Astrocyte of the cerebellum (primary cell): ENCODE measurements at regions of chr5 and their contacts with region 1.

Region 1: GRCh38 chr5:72032788-72033187 is 74.5 kb upstream of the MAP1B start:
- DNase-seq: no peak
- H3K4me3 ChIP-seq: no peak overlapping the region
- CTCF ChIP-seq: no peak

Region 2: GRCh38 chr5:72096602-72097188 is 63.9 kb after region 1 on chr5:
- in situ Hi-C with region 1: loop called (anchors 5 kb)
- DNase-seq: no peak
- H3K4me3 ChIP-seq: no peak overlapping the region
- CTCF ChIP-seq: no peak